Aorta (tissue), 5 donors: ENCODE measurements at regions of chr6 and their contacts with region 1.

Region 1: DNA sequence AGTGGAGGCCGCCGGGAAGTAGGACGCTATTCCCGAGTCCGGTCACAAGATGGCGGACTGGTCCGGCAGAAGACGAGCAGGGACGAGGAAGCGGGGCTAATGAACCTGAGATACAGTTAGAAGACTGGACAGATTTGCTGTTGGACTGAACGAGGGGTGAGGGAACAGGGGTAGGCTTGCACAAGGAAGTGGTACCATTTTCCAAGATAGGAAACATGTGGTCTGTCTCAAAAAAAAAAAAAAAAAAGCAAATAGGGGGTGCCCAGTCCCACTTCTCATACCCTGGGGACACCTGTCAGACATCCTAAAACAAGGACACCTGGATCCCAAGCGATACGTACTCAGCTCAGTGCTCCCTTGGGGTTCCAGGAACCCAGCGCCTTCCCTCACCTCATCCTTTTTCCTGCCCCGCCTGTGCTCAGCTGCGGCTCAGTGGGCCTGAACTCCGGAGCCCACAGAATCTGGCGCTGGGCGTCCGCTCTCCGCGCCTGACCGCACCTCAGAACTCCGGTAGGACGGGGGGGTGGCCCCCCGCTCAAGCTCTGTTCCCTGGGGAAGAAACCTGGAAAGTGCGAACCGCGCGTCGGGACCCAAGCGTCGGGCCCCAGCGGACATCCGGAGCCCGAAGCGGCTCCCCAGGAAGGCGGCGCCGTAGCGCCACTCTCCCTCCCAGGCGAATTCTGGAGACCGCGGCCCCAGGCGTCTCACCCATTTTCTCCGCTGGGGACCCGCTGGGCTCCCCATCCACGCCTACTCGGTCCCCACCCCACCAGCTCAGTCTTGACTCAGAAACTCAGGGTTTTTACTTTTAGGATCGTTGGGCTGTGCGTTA is at the start of gene LY6G5C:
- DNase-seq: peak; percentile 90 to 93
- ATAC-seq: peak; percentile 94
- H3K4me3 ChIP-seq: peak within 1 kb of the TSS in 1 of 2 donors; percentile 56
- H3K27ac ChIP-seq: no peak within 1 kb of the TSS
- H3K4me1 ChIP-seq: no peaks in the 10 kb centered on the region
- H3K27me3 ChIP-seq: no peaks in the 10 kb centered on the region
- total RNA-seq, gene LY6G5C: 1.2 to 3.3 TPM

Region 2: DNA sequence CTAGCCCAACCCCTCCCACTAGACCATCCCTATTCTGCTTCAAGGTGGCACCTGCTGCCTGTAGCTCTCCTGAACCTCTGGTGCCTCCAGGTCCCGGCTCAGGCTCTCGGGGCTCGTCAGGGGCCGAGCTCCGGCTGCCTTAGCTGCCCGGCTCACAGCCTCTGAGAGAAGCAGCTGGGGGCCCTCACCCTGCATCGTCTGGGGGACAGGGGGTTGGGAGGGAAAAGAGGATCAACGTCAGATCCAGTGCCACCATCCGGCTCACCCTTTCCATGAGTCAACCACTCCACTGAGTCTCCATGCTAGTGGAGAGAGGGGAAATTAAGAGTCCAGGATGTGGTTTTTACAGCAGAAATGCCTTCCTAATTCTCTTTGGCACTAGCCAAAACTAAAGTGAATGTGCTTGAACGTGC is 41.6 kb before region 1 on chr6:
- intact Hi-C with region 1: no loop called
- DNase-seq: no peak
- ATAC-seq: no peak
- H3K4me3 ChIP-seq: no peak overlapping the region
- H3K27ac ChIP-seq: no peak overlapping the region
- H3K4me1 ChIP-seq: no peaks in the 10 kb centered on the region
- H3K27me3 ChIP-seq: no peaks in the 10 kb centered on the region

Region 3: GRCh38 chr6:31702819-31703522 is 21.9 kb after region 1 on chr6 and contains the start of gene ABHD16A:
- intact Hi-C with region 1: no loop called
- DNase-seq: peak; percentile 99 to 100
- ATAC-seq: peak; percentile 98
- H3K4me3 ChIP-seq: peak within 1 kb of the TSS; percentile 75 to 95
- H3K27ac ChIP-seq: peak within 1 kb of the TSS; percentile 95 to 96
- H3K4me1 ChIP-seq: no peaks in the 10 kb centered on the region
- H3K27me3 ChIP-seq: no peaks in the 10 kb centered on the region
- total RNA-seq, gene ABHD16A: 41.8 to 48.1 TPM

Region 4: GRCh38 chr6:31729515-31729978 is 48.5 kb after region 1 on chr6:
- intact Hi-C with region 1: loop called in 1 of 2 experiments (anchors 2 kb)
- DNase-seq: peak; percentile 96 to 97
- ATAC-seq: peak; percentile 93
- H3K4me3 ChIP-seq: peak overlapping the region; percentile 83 to 92
- H3K27ac ChIP-seq: peak overlapping the region; percentile 88 to 94
- H3K4me1 ChIP-seq: no peaks in the 10 kb centered on the region
- H3K27me3 ChIP-seq: no peaks in the 10 kb centered on the region

Region 5: GRCh38 chr6:31827286-31828079 is 146.4 kb after region 1 on chr6 and contains the start of gene HSPA1B:
- intact Hi-C with region 1: loop called (anchors 2 to 10 kb)
- DNase-seq: peak; percentile 99
- ATAC-seq: peak; percentile 94
- H3K4me3 ChIP-seq: peak within 1 kb of the TSS; percentile 42 to 57
- H3K27ac ChIP-seq: peak within 1 kb of the TSS; percentile 98 to 99
- H3K4me1 ChIP-seq: peaks cover 0 to 3% of the 10 kb centered on the region in 2 donors
- H3K27me3 ChIP-seq: peaks cover 0 to 2% of the 10 kb centered on the region in 2 donors
- total RNA-seq, gene HSPA1B: 155 to 332 TPM

Region 6: DNA sequence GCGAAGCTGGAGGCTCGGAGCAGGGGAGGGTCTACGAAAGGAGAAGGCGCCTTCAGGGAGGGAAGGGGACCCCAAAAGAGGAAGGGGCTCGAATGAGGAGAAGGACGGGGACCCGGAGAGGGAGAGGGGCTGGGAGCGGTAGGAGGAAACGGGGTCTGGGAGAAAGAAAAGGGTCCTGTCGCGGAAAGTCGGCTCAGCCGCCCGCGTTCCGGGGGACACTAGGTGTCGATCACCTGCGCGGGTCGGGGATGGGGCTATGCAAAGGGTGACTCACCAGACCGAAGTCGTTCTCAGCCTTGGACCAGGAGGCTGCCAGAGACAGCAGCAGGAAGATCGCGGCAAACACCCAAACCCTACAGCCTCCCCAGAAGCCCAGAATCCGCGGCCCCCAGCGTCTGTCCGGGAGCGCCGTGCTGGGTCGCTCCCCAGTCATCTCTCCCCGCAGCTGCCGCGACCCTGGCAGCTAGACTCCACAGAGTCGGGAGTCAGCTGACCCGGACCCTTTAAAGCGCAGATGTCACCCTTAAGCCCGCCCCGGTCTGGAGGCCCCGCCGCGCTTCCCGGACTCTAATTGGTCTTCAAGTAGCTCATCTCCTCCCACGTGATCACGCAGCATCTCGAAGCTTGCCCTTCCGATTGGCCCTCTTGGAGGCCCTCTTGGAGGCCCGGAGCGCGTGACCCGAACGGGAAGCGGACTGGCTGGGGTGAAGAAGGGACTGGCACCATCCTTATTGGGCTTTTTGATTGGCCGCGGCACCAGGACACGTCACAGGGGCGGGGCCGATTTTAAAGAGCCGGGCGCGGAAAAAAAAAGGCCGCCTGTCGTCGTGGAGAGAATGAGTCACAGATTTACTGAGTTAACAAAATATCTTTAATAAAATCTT is 181.5 kb after region 1 on chr6 and contains the start of gene NEU1:
- intact Hi-C with region 1: loop called in 1 of 2 experiments (anchors 10 kb)
- DNase-seq: peak; percentile 99 to 100
- ATAC-seq: peak; percentile 98
- H3K4me3 ChIP-seq: peak within 1 kb of the TSS; percentile 43 to 48
- H3K27ac ChIP-seq: peak within 1 kb of the TSS in 1 of 2 donors; percentile 74
- H3K4me1 ChIP-seq: no peaks in the 10 kb centered on the region
- H3K27me3 ChIP-seq: no peaks in the 10 kb centered on the region
- total RNA-seq, gene NEU1: 23.9 to 24.6 TPM

Region 7: GRCh38 chr6:31952140-31952805 is 271.2 kb after region 1 on chr6:
- intact Hi-C with region 1: loop called in 1 of 2 experiments (anchors 5 kb)
- DNase-seq: peak; percentile 80 to 90
- ATAC-seq: peak; percentile 62
- H3K4me3 ChIP-seq: no peak overlapping the region
- H3K27ac ChIP-seq: no peak overlapping the region
- H3K4me1 ChIP-seq: no peaks in the 10 kb centered on the region
- H3K27me3 ChIP-seq: no peaks in the 10 kb centered on the region